A673 (cell line): ENCODE measurements at regions of chr11 and their contacts with region 1.

Region 1: GRCh38 chr11:105315287-105315686 is 175.7 kb upstream of the CARD18 start:
- DNase-seq: peak; percentile 13
- H3K4me3 ChIP-seq: no peak overlapping the region
- H3K27ac ChIP-seq: no peak overlapping the region
- H3K4me1 ChIP-seq: no peaks in the 10 kb centered on the region
- H3K27me3 ChIP-seq: no peaks in the 10 kb centered on the region
- CTCF ChIP-seq: peak; percentile 34

Region 2: DNA sequence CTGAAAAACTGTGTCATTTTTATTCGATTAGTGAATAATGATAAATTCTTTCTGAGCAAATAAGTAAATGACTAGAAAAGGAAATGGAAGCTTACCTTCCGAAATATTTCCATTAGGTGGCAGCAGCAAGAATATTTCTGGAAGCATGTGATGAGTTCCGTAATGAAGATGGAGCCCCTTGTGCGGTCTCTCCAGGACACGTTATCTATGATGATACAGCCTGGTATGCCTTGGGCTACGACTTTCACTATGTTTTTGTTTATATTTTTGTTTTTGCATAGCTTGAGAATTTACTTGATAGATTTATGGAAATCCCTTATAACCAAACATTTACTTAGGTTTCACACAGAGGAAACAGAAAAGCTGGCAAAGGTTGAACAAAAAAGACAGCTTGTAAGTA is 318.0 kb before region 1 on chr11:
- CTCF ChIA-PET with region 1: no interaction called
- POLR2A ChIA-PET with region 1: no interaction called
- intact Hi-C with region 1: loop called (anchors 5 kb)
- DNase-seq: peak; percentile 74
- H3K4me3 ChIP-seq: no peak overlapping the region
- H3K27ac ChIP-seq: no peak overlapping the region
- H3K4me1 ChIP-seq: no peaks in the 10 kb centered on the region
- H3K27me3 ChIP-seq: no peaks in the 10 kb centered on the region
- CTCF ChIP-seq: peak; percentile 62

Region 3: GRCh38 chr11:105968021-105968697 is 652.9 kb after region 1 on chr11:
- CTCF ChIA-PET with region 1: no interaction called
- POLR2A ChIA-PET with region 1: no interaction called
- intact Hi-C with region 1: no loop called
- DNase-seq: no peak
- H3K4me3 ChIP-seq: no peak overlapping the region
- H3K27ac ChIP-seq: no peak overlapping the region
- H3K4me1 ChIP-seq: no peaks in the 10 kb centered on the region
- H3K27me3 ChIP-seq: no peaks in the 10 kb centered on the region
- CTCF ChIP-seq: no peak